ENCODE measurements at regions of chr1 and their contacts with region 1.

Region 1: GRCh38 chr1:22821012-22821411 is 110.4 kb downstream of the EPHB2 start:
- DNase-seq: no peak
- H3K4me3 ChIP-seq: no peak overlapping the region
- CTCF ChIP-seq: no peak

Region 2: GRCh38 chr1:22739648-22740385 is 81.2 kb before region 1 on chr1:
- in situ Hi-C with region 1: no loop called
- DNase-seq: peak; percentile 87
- H3K4me3 ChIP-seq: no peak overlapping the region
- CTCF ChIP-seq: no peak

Region 3: DNA sequence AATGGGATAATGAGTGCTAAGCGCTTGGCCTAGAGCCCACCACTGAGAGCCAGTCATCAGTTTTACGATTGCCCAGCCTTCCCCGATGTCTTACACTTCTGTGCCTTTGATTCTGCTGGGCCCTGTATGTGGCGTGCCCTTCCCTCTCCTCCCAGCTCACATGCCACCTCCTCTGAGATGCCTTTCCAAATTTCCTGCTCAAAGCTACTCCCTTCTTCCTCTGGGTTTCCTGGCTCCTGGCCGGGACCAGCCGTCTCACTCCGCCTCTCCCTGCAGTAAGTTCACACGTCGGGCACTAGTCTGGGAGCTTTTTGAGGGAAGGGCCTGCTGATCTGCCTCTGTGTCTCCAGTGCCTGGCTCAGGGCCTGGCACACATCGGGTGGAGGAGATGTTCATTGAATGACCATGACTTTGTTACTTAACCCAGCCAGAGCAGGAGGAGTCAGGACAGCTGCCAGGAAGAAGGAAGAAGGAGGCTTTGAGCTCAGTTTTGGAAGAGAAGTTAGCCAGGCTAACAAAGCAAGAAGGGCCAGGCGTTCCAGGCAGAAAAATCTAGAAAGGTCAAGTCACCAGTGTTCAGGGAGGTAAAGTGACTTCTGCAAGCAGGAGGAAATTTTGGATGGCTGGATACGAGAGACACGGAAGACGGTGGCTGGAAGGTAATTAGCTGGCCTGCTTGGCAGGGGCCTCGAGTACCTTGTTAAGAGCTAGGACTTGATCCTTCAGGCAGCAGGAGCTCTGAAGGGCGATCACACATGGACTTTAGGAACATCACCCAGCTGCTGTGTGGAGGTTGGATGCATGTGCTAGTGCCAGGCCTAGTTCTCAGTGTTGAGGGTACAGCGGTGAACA is 46.8 kb before region 1 on chr1:
- in situ Hi-C with region 1: loop called (anchors 5 kb)
- DNase-seq: peak; percentile 36
- H3K4me3 ChIP-seq: no peak overlapping the region
- CTCF ChIP-seq: no peak

Region 4: DNA sequence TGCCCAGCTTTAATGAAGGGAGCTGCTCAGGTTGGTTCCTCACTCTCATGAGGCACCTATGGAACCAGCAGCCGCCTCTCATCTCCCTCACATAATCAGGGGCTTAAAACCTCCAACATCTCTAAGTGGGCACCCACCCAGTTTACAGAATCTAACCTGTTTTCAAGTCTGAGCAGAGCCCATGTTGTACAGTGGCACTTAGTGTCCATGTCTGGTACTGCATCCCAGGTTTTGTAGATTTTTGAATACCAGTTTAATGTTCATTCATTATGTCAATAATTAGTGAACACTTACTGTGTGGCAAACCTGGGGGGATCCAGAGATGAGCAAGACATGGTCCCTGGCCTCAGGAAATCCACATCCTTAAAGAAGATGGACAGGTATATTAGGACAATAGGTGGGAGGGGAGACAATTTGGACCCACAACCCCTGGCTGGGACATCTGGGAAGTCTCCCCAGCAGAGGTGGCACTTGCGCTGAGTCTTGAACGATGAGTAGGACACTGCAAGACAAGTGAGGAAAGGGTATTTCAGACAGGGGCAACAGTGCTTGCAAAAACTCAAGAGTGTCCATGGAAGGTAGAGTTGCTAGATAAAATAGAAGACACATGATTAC is 68.3 kb after region 1 on chr1:
- in situ Hi-C with region 1: loop called (anchors 5 kb)
- DNase-seq: peak; percentile 33
- H3K4me3 ChIP-seq: no peak overlapping the region
- CTCF ChIP-seq: peak; percentile 92

Region 5: GRCh38 chr1:22916471-22916820 is 95.4 kb after region 1 on chr1:
- in situ Hi-C with region 1: no loop called
- DNase-seq: no peak
- H3K4me3 ChIP-seq: no peak overlapping the region
- CTCF ChIP-seq: no peak

Measured in astrocyte of the cerebellum (primary cell).